ENCODE measurements at regions of chr9 and their contacts with region 1.

Region 1: DNA sequence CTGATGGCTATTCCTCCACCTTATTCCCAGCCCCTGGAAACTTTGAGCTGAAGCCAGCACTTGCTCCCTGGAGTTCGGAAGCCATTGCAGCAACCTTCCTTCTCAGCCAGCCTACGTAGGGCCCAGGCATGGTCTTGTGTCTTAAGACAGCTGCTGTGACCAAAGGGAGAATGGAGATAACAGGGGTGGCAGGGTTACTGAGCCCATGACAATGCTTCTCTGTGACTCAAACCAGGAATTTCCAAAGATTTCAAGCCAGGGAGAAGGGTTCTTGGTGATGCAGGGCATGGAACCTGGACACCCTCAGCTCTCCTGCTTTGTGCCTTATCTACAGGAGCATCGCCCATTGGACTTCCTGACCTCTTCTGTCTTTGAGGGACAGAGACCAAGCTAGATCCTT is 12.2 kb downstream of the SLC31A2 start:
- DNase-seq: no peak
- ATAC-seq: no peak
- H3K4me3 ChIP-seq: no peak overlapping the region
- H3K27ac ChIP-seq: no peak overlapping the region
- H3K4me1 ChIP-seq: no peaks in the 10 kb centered on the region
- CTCF ChIP-seq: no peak
- EP300 ChIP-seq: no peak
- POLR2A ChIP-seq: no peak
- RAD21 ChIP-seq: no peak

Region 2: GRCh38 chr9:113150670-113151611 is 12.1 kb before region 1 on chr9 and contains the start of gene SLC31A2:
- CTCF ChIA-PET with region 1: interaction called, 10 read pairs
- POLR2A ChIA-PET with region 1: interaction called, 3 read pairs
- DNase-seq: peak; percentile 87 to 88
- ATAC-seq: peak; percentile 94 to 99
- H3K4me3 ChIP-seq: peak within 1 kb of the TSS; percentile 76
- H3K27ac ChIP-seq: peak within 1 kb of the TSS; percentile 62 to 86
- H3K4me1 ChIP-seq: 0 out of 3 replicates have a peak, but pooled peaks cover 3% of the 10 kb centered on the region
- CTCF ChIP-seq: peak; percentile 49; the same call in 2 of the 3 replicates
- EP300 ChIP-seq: no peak
- POLR2A ChIP-seq: peak; percentile 41; the same call in 1 of the 2 replicates
- RAD21 ChIP-seq: no peak; a peak in 1 of 5 replicates
- polyA plus RNA-seq, gene SLC31A2: 5.8 and 7.5 TPM in 2 replicates